IMR-90 (cell line): ENCODE measurements at regions of chr16 and their contacts with region 1.

Region 1: DNA sequence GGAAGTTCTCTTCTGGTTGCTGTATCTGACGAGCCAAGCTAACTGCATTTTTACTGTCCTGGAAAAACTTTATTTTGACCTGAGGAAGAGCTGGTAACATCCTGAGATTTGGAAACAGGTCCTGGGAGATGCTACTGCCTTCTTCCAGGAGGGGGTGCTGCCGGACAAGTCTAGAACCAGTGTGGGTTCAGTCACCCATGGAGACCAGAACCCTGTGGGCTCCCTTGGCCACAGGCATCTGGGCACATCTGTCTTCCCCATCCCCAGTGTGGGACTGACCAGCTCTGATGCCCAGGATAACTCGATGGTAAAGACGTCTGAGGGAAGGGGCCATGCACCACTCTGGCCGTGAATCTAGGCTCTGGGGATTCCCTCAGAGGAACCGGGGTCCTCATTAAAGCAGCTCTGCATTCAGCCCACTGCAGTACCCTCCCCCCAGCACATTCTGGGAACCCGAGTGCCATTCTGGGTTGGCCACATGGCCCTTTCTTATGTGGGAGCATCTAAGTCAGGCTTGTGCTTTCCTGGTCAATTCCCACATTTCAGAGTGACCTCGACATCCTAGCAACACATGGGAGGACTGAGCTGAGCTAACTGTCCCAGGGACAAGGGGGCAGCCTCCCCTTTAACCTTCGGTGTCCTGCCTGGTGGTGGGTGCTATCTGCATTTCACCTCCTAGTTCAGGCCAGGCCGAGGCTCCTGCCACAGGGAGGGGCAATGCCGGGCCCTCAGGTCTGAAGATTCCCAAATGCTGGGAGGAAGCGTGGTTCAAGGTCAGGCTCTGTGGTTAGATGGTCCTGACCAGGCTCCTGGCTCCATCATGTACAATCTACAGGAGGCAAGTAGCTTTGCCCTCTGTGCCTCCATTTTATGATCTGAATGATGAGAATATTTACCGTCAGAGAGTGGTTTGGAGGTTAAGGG is 6.4 kb downstream of the C16orf86 start:
- DNase-seq: peak; percentile 67
- ATAC-seq: peak; percentile 60
- H3K4me3 ChIP-seq: no peak overlapping the region
- H3K27ac ChIP-seq: no peak overlapping the region
- H3K4me1 ChIP-seq: no peaks in the 10 kb centered on the region
- H3K27me3 ChIP-seq: no peaks in the 10 kb centered on the region
- CTCF ChIP-seq: peak; percentile 81
- POLR2A ChIP-seq: no peak
- RAD21 ChIP-seq: peak; percentile 85

Region 2: DNA sequence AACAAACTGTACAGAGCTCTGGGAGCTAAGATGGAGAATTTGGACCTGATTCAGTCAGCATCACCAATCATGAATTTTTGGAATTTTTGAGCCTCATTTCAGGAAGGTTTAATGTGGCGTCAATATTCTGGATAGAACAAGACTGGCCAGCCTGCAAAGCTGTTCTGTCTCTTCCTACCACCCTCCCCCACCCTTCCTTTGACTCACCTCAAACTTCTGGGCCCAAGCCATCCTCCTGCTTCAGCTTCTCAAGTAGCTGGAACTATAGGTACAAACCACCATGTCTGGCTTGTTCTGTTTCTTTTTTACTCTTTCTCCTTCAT is 78.0 kb before region 1 on chr16:
- CTCF ChIA-PET with region 1: no interaction called
- POLR2A ChIA-PET with region 1: no interaction called
- dilution Hi-C with region 1: no loop called
- in situ Hi-C with region 1: no loop called
- intact Hi-C with region 1: no loop called
- DNase-seq: peak; percentile 68
- ATAC-seq: peak; percentile 38
- H3K4me3 ChIP-seq: no peak overlapping the region
- H3K27ac ChIP-seq: no peak overlapping the region
- H3K4me1 ChIP-seq: peaks cover 8% of the 10 kb centered on the region
- H3K27me3 ChIP-seq: no peaks in the 10 kb centered on the region
- CTCF ChIP-seq: no peak
- POLR2A ChIP-seq: no peak
- RAD21 ChIP-seq: no peak

Region 3: DNA sequence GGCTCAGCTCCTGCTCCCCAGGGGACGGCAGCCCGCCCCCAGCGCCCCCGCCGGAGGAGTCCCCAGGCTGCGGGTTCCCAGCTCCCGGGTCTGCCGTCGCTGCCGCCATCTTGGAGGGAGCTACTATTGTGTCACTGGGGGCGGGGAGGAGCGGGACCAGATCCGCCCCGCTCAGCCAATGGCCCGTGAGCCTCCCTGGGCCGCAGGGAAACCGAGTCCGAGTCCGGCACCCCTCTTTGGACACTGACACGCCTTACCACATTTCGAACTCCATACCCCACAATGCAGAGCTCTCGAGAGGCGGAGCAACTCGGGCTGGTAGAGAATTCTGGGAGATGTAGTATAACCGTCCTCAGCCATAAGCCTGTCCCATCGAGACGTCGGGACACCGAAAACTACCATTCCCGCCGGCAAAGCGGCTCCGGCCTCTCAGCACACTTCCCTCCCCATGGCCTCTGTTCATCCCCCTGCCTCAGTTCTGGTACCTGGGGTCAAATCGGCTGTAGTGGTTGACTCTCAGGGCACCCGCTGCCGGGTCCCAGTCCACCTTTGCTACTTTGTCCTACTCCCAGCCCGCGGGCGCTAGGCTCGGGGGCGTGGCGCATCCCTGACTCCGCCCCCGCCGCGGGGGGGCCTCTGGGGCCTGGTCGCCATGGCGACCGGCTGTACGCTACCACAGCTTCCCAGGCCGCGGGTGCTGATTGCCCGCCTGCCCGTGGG is 133.6 kb after region 1 on chr16 and contains the starts of genes RANBP10 and TSNAXIP1:
- CTCF ChIA-PET with region 1: no interaction called
- POLR2A ChIA-PET with region 1: interaction called, 4 read pairs
- dilution Hi-C with region 1: no loop called
- in situ Hi-C with region 1: no loop called
- intact Hi-C with region 1: loop called (anchors 5 kb)
- DNase-seq: peak; percentile 99
- ATAC-seq: peak; percentile 96
- H3K4me3 ChIP-seq: peak within 1 kb of the TSS; percentile 76
- H3K27ac ChIP-seq: peak within 1 kb of the TSS; percentile 59
- H3K4me1 ChIP-seq: peaks cover 6% of the 10 kb centered on the region
- H3K27me3 ChIP-seq: no peaks in the 10 kb centered on the region
- CTCF ChIP-seq: no peak
- POLR2A ChIP-seq: peak; percentile 82
- RAD21 ChIP-seq: no peak
- total RNA-seq, gene RANBP10: 2.2 and 2.7 TPM in 2 replicates
- total RNA-seq, gene TSNAXIP1: 0.56 and 0.72 TPM in 2 replicates

Region 4: GRCh38 chr16:67928561-67929364 is 255.8 kb after region 1 on chr16:
- CTCF ChIA-PET with region 1: no interaction called
- POLR2A ChIA-PET with region 1: no interaction called
- dilution Hi-C with region 1: no loop called
- in situ Hi-C with region 1: loop called (anchors 5 kb)
- intact Hi-C with region 1: loop called (anchors 2 kb)
- DNase-seq: peak; percentile 43
- ATAC-seq: peak; percentile 92
- H3K4me3 ChIP-seq: no peak overlapping the region
- H3K27ac ChIP-seq: no peak overlapping the region
- H3K4me1 ChIP-seq: no peaks in the 10 kb centered on the region
- H3K27me3 ChIP-seq: no peaks in the 10 kb centered on the region
- CTCF ChIP-seq: peak; percentile 87
- POLR2A ChIP-seq: no peak
- RAD21 ChIP-seq: peak; percentile 94

Region 5: DNA sequence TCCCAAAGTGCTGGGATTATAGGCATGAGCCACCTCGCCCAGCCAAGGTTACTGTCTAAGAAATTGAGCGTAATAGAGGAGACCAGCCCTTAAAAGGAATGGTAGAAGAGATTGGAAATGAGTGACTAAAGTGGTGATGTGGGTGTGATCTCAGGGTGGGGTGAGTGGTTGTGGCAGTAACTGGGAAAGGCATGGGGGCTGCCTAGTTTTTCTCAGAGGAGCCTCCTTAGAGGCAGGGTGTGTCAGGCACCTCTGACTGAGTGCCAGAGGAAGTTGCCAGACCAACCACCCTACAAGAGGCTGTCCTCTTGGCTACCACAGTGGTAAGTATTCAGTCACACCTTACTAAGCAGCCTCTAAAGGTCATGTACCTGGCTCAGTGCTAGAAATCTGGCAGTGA is 358.9 kb after region 1 on chr16:
- CTCF ChIA-PET with region 1: no interaction called
- POLR2A ChIA-PET with region 1: no interaction called
- dilution Hi-C with region 1: no loop called
- in situ Hi-C with region 1: no loop called
- intact Hi-C with region 1: loop called (anchors 10 kb)
- DNase-seq: no peak
- ATAC-seq: no peak
- H3K4me3 ChIP-seq: no peak overlapping the region
- H3K27ac ChIP-seq: no peak overlapping the region
- H3K4me1 ChIP-seq: no peaks in the 10 kb centered on the region
- H3K27me3 ChIP-seq: no peaks in the 10 kb centered on the region
- CTCF ChIP-seq: no peak
- POLR2A ChIP-seq: no peak
- RAD21 ChIP-seq: no peak